Prostate gland (tissue), 2 donors: ENCODE measurements at regions of chr20 and their contacts with region 1.

Region 1: GRCh38 chr20:24992487-24993205 is at the start of gene APMAP:
- DNase-seq: peak; percentile 96
- H3K4me3 ChIP-seq: peak within 1 kb of the TSS; percentile 70 to 86
- H3K27ac ChIP-seq: peak within 1 kb of the TSS; percentile 85 to 90
- H3K4me1 ChIP-seq: peaks cover 11% of the 10 kb centered on the region
- H3K27me3 ChIP-seq: no peaks in the 10 kb centered on the region
- CTCF ChIP-seq: peak in 1 of 4 experiments; percentile 29
- POLR2A ChIP-seq: peak; percentile 96
- total RNA-seq, gene APMAP: 70.5 to 93.8 TPM

Region 2: GRCh38 chr20:23361598-23362384 is 1630.9 kb before region 1 on chr20 and contains the start of gene GZF1:
- intact Hi-C with region 1: loop called (anchors 10 kb)
- DNase-seq: peak; percentile 98
- H3K4me3 ChIP-seq: peak within 1 kb of the TSS; percentile 78 to 91
- H3K27ac ChIP-seq: peak within 1 kb of the TSS; percentile 97 to 98
- H3K4me1 ChIP-seq: peaks cover 8% of the 10 kb centered on the region
- H3K27me3 ChIP-seq: no peaks in the 10 kb centered on the region
- CTCF ChIP-seq: peak in 2 of 4 experiments; percentile 58 to 77
- POLR2A ChIP-seq: peak; percentile 94
- total RNA-seq, gene GZF1: 9.4 to 45.3 TPM

Region 3: DNA sequence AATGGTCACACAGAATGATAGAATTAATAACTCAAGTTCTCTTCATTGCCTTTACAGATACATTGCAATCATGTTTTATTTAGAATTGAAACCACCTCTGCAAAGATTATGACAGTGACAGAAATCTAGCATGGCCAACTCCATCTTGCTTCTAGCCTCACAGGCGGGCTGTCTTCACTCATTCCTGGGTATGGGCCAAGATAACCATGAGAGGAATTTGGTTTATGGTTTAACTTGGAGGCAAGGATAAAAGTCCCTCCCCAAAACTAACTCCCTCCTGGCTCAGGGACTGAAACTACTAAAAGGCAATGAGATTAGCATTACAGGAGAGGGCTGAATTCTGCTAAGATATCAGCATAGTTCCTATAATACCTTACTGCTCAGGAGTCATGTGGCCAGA is 138.7 kb before region 1 on chr20:
- intact Hi-C with region 1: no loop called
- DNase-seq: no peak
- H3K4me3 ChIP-seq: no peak overlapping the region
- H3K27ac ChIP-seq: no peak overlapping the region
- H3K4me1 ChIP-seq: no peaks in the 10 kb centered on the region
- H3K27me3 ChIP-seq: no peaks in the 10 kb centered on the region
- CTCF ChIP-seq: no peak
- POLR2A ChIP-seq: no peak

Region 4: GRCh38 chr20:25065625-25066338 is 73.1 kb after region 1 on chr20:
- intact Hi-C with region 1: loop called (anchors 1 kb)
- DNase-seq: peak; percentile 69
- H3K4me3 ChIP-seq: no peak overlapping the region
- H3K27ac ChIP-seq: no peak overlapping the region
- H3K4me1 ChIP-seq: no peaks in the 10 kb centered on the region
- H3K27me3 ChIP-seq: no peaks in the 10 kb centered on the region
- CTCF ChIP-seq: peak; percentile 38 to 94 (median 81)
- POLR2A ChIP-seq: no peak

Region 5: DNA sequence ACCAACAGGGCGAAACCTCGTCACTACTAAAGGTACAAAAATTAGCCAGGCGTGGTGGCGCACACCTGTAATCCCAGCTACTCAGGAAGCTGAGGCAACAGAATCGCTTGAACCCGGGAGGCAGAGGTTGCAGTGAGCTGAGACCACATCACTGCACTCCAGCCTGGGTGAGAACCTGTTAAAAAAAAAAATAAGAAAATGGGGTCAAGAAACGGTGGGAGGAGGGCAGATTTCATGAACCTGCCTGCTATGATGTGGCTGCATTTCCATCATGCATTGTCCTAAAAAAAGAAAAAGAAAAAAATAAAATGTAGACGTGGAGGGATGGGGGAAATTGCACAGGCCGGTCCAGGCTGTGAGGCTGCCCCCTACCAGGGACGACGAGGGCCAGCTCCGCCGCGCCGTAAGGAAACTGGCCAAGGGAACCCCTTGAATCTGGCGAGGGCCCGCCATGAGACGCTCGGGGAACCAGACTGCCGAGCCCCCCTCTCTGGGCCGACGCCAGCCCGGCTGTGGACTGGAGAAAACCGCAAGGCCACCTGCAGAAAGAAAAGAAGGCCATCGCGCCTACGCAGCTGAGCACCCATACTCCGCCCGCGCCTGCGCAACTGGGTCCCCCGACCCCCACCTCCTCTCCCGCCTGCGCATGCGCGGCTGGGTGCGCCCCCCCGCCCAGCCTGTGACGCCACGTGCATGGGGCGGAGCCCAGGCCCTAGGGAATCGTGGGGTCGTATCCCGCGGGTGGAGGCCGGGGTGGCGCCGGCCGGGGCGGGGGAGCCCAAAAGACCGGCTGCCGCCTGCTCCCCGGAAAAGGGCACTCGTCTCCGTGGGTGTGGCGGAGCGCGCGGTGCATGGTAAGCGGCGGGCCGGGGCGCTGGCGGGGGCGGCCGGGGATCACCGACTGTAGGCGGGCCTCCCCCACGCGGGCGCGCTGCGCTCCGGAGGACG is 202.6 kb after region 1 on chr20 and contains the start of gene ENTPD6:
- intact Hi-C with region 1: loop called (anchors 5 kb)
- DNase-seq: peak; percentile 92
- H3K4me3 ChIP-seq: peak within 1 kb of the TSS; percentile 78 to 94
- H3K27ac ChIP-seq: peak within 1 kb of the TSS; percentile 93 to 95
- H3K4me1 ChIP-seq: peaks cover 4% of the 10 kb centered on the region
- H3K27me3 ChIP-seq: no peaks in the 10 kb centered on the region
- CTCF ChIP-seq: peak in 3 of 4 experiments; percentile 20 to 45 (median 31)
- POLR2A ChIP-seq: peak; percentile 92
- total RNA-seq, gene ENTPD6: 105 to 194 TPM

Region 6: DNA sequence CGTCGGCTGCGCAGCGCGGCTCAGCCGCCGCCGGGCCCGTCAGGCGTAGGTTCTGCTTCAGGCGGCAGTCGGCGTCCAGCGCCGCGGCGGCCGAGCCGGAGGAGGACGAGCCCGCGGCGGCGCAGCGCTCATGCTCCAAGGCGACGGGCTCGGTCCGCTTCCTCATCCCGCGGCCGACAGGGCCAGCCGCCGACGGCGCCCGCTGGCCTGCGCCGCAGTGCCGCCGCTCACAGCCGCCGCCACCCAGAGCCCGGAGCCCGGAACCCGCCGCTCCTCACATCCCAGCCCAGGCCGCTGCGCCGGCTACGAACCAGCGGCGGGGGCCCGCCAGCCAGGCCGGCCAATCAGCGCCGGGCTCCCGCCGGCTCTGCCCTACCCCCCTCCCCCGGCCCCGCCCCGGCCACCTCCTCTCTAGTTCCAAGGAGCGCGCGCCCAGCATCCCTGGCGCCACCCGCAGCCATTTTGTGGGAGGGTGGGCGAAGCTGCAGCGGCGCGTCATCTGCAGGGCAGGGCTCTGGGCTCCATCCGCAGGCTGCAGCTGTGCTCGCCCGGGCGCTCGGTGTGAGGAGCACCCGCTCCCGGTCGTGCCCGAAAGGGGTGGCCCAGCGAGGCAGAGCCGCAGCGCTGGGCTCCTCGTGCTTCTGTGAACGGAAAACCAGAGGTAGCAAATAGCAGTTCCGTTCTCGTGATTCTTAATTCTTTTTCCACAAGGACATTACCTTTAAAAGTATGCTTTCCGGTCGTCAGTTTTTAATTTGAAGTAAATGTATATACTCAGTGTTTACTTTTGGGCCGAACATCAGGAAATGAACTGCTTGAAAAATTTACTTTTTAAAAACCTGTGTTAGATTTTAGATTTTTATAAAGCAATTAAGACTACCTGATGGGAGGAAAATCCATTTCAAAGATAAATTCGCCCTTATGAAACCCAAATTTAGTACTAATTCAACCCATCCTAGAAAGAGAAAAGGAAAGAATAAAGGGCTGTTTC is 398.2 kb after region 1 on chr20 and contains the start of gene ABHD12:
- intact Hi-C with region 1: loop called (anchors 2 kb)
- DNase-seq: peak; percentile 96
- H3K4me3 ChIP-seq: peak within 1 kb of the TSS; percentile 83 to 89
- H3K27ac ChIP-seq: peak within 1 kb of the TSS; percentile 86 to 94
- H3K4me1 ChIP-seq: no peaks in the 10 kb centered on the region
- H3K27me3 ChIP-seq: no peaks in the 10 kb centered on the region
- CTCF ChIP-seq: peak in 2 of 4 experiments; percentile 19 to 22
- POLR2A ChIP-seq: peak; percentile 68
- total RNA-seq, gene ABHD12: 70.1 to 84.7 TPM

Region 7: GRCh38 chr20:25623736-25624499 is 631.3 kb after region 1 on chr20 and contains the start of gene NANP:
- intact Hi-C with region 1: loop called (anchors 10 kb)
- DNase-seq: peak; percentile 95
- H3K4me3 ChIP-seq: peak within 1 kb of the TSS; percentile 62 to 86
- H3K27ac ChIP-seq: peak within 1 kb of the TSS; percentile 84 to 94
- H3K4me1 ChIP-seq: no peaks in the 10 kb centered on the region
- H3K27me3 ChIP-seq: no peaks in the 10 kb centered on the region
- CTCF ChIP-seq: no peak
- POLR2A ChIP-seq: peak; percentile 70
- total RNA-seq, gene NANP: 4.0 to 5.3 TPM